Activated naive CD4-positive, alpha-beta T cell treated with anti-CD3 and anti-CD28 coated beads for 36 hours (primary cell): ENCODE measurements at regions of chr5 and their contacts with region 1.

Region 1: DNA sequence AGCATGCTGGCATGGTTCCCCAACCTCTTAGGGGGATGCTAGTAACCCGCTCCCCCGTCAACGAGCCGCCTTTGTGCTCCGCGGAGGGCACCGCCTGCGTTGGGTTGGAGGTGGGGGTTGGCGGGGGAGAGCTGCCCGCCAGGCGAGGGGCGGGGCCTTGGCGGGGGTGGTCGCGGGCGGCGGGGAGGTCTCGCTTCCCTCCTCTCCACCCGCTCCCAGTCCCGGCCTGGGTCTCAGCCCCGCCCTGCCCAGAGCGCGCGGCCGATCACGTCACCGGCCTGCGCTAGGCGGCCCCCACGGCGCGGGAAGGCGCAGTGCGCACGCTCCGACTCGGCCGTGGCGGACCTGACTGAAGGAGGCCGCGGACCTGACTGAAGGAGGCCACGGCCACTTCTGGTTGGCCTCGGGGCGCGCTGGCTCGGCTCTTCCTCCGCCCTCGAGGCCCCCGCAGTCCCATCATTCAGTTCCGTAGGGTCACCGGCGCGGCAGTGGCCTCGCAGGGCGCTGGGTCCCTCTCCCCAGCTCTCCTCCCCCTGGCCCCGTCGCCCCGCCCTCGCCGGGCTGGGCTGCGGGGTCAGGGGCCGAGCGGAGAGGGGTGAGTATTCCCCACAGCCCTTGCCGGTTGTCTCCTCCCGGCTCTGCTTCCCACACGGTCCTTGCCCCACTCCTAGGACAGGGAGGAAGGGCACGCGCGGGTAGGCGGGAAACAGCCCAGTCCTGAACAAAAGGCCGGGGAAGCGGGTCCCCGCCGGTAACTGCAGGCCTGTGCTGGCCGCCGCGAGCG is at the start of gene ATG10:
- DNase-seq: peak; percentile 86
- H3K4me3 Mint-ChIP-seq: peak within 1 kb of the TSS; percentile 94
- H3K27ac Mint-ChIP-seq: peak within 1 kb of the TSS; percentile 98
- H3K4me1 Mint-ChIP-seq: peaks cover 22% of the 10 kb centered on the region
- H3K27me3 Mint-ChIP-seq: no peaks in the 10 kb centered on the region
- total RNA-seq, gene ATG10: 7.2 to 8.0 TPM

Region 2: DNA sequence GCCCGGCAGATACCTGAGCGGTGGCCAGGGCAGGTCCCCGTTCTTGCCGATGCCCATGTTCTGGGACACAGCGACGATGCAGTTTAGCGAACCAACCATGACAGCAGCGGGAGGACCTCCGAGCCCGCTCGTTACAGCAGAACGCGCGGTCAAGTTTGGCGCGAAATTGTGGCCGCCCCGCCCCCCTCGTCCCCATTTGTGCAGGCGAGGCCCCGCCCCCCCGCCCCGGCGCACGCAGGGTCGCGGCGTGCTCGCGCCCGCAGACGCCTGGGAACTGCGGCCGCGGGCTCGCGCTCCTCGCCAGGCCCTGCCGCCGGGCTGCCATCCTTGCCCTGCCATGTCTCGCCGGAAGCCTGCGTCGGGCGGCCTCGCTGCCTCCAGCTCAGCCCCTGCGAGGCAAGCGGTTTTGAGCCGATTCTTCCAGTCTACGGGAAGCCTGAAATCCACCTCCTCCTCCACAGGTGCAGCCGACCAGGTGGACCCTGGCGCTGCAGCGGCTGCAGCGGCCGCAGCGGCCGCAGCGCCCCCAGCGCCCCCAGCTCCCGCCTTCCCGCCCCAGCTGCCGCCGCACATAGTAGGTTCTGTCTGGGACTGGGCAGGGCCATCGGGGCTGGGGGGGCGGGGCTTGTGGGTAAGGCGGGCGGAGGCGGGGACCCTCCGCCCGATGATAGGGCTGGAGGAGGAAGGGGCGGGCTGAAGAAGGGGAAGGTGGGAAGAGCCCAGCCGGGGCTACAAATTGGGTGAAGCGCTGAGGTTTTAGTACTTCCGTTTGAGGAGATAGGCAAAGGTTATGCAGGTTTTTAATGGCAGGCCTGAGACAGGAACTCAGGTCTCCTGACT is 1317.3 kb before region 1 on chr5 and contains the starts of genes DHFR and MSH3:
- CTCF ChIA-PET with region 1: no interaction called
- intact Hi-C with region 1: loop called (anchors 2 kb)
- DNase-seq: peak; percentile 95
- H3K4me3 Mint-ChIP-seq: peak within 1 kb of the TSS; percentile 95
- H3K27ac Mint-ChIP-seq: peak within 1 kb of the TSS; percentile 99
- H3K4me1 Mint-ChIP-seq: peaks cover 25% of the 10 kb centered on the region
- H3K27me3 Mint-ChIP-seq: no peaks in the 10 kb centered on the region
- total RNA-seq, gene DHFR: 107 to 112 TPM
- total RNA-seq, gene MSH3: 25.1 to 25.8 TPM

Region 3: DNA sequence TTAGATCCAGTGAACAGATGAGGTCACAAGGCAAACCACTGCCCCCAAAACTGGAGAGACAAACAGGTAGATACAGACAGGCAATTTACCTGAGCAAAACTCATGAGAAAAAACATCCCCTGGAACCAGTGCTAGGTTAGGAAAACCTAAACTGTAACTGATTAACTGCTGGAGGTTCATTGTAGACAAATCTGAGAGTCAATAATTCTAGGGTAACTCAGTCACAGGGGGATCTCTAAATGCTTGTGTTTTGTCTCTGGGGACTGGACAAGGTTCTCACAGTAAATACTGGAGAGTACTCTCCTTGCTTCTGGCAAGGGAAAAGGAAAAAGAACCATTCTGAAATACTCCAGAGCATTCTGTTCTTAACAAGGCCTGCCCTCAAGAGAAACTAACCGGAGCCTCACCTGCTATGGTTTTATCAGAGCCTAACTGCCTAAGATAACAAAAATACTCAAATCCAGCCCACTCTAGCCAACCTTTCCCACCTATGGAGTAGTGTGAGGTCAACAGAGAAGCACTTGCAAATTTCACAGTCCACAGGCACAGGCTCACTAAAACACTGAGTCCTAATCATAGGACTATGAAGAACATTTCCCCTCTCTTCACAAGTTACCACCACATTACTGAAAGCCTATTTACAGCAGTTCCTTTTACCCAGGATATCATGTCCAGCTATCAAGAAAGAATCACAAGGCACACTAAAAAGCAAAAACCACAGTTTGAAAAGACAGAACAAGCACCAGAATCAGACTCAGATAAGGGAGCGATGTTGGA is 438.1 kb before region 1 on chr5:
- CTCF ChIA-PET with region 1: interaction called, 3 read pairs
- intact Hi-C with region 1: loop called (anchors 10 kb)
- DNase-seq: no peak
- H3K4me3 Mint-ChIP-seq: no peak overlapping the region
- H3K27ac Mint-ChIP-seq: no peak overlapping the region
- H3K4me1 Mint-ChIP-seq: peaks cover 46% of the 10 kb centered on the region
- H3K27me3 Mint-ChIP-seq: no peaks in the 10 kb centered on the region

Region 4: DNA sequence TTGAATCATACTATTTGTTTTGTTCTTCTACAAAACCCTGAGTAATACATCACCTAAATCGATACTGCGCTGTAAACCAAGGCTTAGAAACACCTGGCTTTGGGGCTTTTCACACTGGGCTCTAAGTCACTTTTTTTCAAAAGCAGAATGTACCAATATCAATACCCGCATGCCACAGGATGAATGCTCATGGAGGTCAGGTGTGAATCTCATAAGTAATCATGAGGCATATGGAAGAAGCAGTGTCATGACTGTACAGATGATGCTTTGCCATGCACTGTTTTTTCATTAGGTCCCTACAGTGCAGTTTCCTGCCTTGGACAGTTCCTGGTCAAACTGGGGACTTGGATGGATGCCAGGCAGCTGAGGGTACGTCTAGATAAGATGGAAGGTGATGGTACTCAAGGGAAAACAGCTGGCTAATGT is 49.0 kb before region 1 on chr5:
- CTCF ChIA-PET with region 1: no interaction called
- intact Hi-C with region 1: no loop called
- DNase-seq: no peak
- H3K4me3 Mint-ChIP-seq: no peak overlapping the region
- H3K27ac Mint-ChIP-seq: no peak overlapping the region
- H3K4me1 Mint-ChIP-seq: no peaks in the 10 kb centered on the region
- H3K27me3 Mint-ChIP-seq: no peaks in the 10 kb centered on the region

Region 5: GRCh38 chr5:82068723-82069122 is 96.8 kb after region 1 on chr5:
- CTCF ChIA-PET with region 1: no interaction called
- intact Hi-C with region 1: loop called (anchors 1 kb)
- DNase-seq: no peak
- H3K4me3 Mint-ChIP-seq: peak overlapping the region; percentile 11
- H3K27ac Mint-ChIP-seq: no peak overlapping the region
- H3K4me1 Mint-ChIP-seq: peaks cover 5% of the 10 kb centered on the region
- H3K27me3 Mint-ChIP-seq: no peaks in the 10 kb centered on the region

Region 6: GRCh38 chr5:82225525-82226172 is 253.7 kb after region 1 on chr5:
- CTCF ChIA-PET with region 1: no interaction called
- intact Hi-C with region 1: loop called (anchors 1 kb)
- DNase-seq: peak; percentile 79
- H3K4me3 Mint-ChIP-seq: no peak overlapping the region
- H3K27ac Mint-ChIP-seq: no peak overlapping the region
- H3K4me1 Mint-ChIP-seq: peaks cover 3% of the 10 kb centered on the region
- H3K27me3 Mint-ChIP-seq: no peaks in the 10 kb centered on the region

Region 7: GRCh38 chr5:82287625-82288024 is 315.7 kb after region 1 on chr5:
- CTCF ChIA-PET with region 1: no interaction called
- intact Hi-C with region 1: no loop called
- DNase-seq: no peak
- H3K4me3 Mint-ChIP-seq: no peak overlapping the region
- H3K27ac Mint-ChIP-seq: no peak overlapping the region
- H3K4me1 Mint-ChIP-seq: peaks cover 5% of the 10 kb centered on the region
- H3K27me3 Mint-ChIP-seq: no peaks in the 10 kb centered on the region

Region 8: GRCh38 chr5:83076742-83077661 is 1105.1 kb after region 1 on chr5 and contains the starts of genes TMEM167A and XRCC4:
- CTCF ChIA-PET with region 1: no interaction called
- intact Hi-C with region 1: loop called (anchors 2 kb)
- DNase-seq: peak; percentile 95
- H3K4me3 Mint-ChIP-seq: peak within 1 kb of the TSS; percentile 98
- H3K27ac Mint-ChIP-seq: peak within 1 kb of the TSS; percentile 96
- H3K4me1 Mint-ChIP-seq: peaks cover 48% of the 10 kb centered on the region
- H3K27me3 Mint-ChIP-seq: no peaks in the 10 kb centered on the region
- total RNA-seq, gene TMEM167A: 58.8 to 64.4 TPM
- total RNA-seq, gene XRCC4: 12.1 to 12.8 TPM